ENCODE measurements at regions of chr10 and their contacts with region 1.

Region 1: DNA sequence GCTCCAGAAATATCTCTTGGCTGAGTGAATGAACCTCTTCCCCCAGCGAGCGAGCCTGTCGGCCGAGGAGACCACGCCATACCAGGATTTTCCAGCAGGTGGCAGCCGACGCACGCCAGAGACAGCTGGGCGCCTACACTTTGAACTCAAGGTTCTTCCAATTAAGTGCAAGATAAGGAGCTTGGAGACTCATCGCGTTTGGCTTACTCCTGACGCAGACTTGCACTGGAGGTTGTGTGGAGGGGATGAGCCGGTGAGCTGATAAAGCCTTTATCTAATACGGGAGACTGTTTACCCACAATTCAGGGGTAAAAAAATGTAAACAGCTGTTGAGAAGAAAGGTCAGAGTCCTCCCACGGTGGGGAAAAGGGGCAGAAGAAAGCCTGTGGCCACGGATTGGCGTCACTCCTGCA is 45.9 kb upstream of the EMX2 start:
- DNase-seq: peak; percentile 72
- H3K4me3 Mint-ChIP-seq: no peak overlapping the region
- H3K27ac Mint-ChIP-seq: no peak overlapping the region
- H3K4me1 Mint-ChIP-seq: peaks cover 7% of the 10 kb centered on the region
- H3K27me3 Mint-ChIP-seq: peaks cover 69% of the 10 kb centered on the region
- CTCF ChIP-seq: peak; percentile 70

Region 2: GRCh38 chr10:117518246-117518645 is 21.6 kb after region 1 on chr10:
- CTCF ChIA-PET with region 1: no interaction called
- intact Hi-C with region 1: no loop called
- DNase-seq: no peak
- H3K4me3 Mint-ChIP-seq: no peak overlapping the region
- H3K27ac Mint-ChIP-seq: no peak overlapping the region
- H3K4me1 Mint-ChIP-seq: no peaks in the 10 kb centered on the region
- H3K27me3 Mint-ChIP-seq: peaks cover 32% of the 10 kb centered on the region
- CTCF ChIP-seq: no peak

Region 3: DNA sequence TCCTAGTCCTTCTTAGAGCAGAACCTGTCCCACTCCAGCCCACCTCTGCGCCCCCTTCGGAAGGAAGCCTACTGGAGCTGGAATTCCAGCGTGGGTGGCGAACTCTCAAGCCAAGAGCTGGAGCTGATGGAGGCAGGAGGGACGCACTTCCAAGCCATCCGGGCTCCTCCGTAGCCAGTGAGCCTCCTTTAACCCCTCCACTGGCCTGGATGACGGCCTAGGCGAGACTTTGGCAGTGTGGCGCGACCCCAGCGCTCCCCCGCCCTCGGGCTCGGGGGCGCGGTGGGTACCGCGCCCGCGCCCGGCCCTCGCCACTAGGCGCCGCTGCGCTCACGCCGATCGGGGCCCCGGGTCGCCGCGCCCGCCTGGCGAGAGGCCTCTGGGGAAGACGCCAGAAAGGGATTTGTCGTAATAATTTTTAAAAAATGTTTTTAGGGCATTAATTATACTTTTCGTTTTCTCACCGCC is 40.8 kb after region 1 on chr10:
- CTCF ChIA-PET with region 1: no interaction called
- intact Hi-C with region 1: no loop called
- DNase-seq: peak; percentile 28
- H3K4me3 Mint-ChIP-seq: no peak overlapping the region
- H3K27ac Mint-ChIP-seq: no peak overlapping the region
- H3K4me1 Mint-ChIP-seq: no peaks in the 10 kb centered on the region
- H3K27me3 Mint-ChIP-seq: peaks cover 55% of the 10 kb centered on the region
- CTCF ChIP-seq: peak; percentile 59

Region 4: DNA sequence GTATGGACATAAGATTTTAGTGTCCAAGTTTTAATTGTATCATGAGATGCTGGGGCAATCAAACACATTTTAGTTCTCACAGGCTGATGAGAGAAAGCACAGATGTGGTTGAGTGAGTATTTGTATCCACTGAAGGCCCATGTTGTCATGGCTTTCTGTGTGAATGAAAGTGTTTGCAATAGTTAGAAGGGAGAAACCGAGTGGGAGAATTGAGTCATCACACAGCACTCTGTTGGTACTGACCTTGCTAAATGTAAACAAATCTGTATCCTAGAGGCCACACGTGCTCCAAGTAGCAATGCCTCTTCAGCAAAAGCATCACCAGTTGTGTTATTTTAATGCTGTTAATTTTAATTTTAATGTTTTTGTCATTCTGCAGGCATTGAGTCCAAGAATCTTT is 167.1 kb after region 1 on chr10:
- CTCF ChIA-PET with region 1: no interaction called
- intact Hi-C with region 1: no loop called
- DNase-seq: no peak
- H3K4me3 Mint-ChIP-seq: no peak overlapping the region
- H3K27ac Mint-ChIP-seq: no peak overlapping the region
- H3K4me1 Mint-ChIP-seq: no peaks in the 10 kb centered on the region
- H3K27me3 Mint-ChIP-seq: peaks cover 18% of the 10 kb centered on the region
- CTCF ChIP-seq: no peak

Region 5: DNA sequence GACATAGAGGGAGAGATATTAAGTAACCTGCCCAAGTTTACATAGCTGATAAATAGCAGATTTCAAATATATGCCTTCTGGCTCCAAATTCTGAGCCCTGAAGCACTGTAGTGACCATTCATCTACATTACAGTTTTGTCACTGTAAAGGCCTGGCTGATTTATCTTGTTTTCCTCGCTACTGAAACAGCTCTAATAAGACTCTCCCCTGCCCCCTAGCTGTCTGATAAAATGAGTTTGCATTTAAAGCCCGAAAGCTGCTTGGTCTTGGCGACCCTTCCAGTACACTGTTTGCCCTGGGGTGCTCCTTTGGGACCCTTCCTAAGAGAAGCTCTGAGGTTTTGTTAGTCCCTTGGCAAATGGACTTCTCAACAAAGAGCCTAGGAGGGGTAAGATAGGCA is 609.8 kb after region 1 on chr10:
- CTCF ChIA-PET with region 1: interaction called, 4 read pairs
- intact Hi-C with region 1: loop called (anchors 1 kb)
- DNase-seq: peak; percentile 15
- H3K4me3 Mint-ChIP-seq: no peak overlapping the region
- H3K27ac Mint-ChIP-seq: no peak overlapping the region
- H3K4me1 Mint-ChIP-seq: no peaks in the 10 kb centered on the region
- H3K27me3 Mint-ChIP-seq: no peaks in the 10 kb centered on the region
- CTCF ChIP-seq: no peak

Region 6: DNA sequence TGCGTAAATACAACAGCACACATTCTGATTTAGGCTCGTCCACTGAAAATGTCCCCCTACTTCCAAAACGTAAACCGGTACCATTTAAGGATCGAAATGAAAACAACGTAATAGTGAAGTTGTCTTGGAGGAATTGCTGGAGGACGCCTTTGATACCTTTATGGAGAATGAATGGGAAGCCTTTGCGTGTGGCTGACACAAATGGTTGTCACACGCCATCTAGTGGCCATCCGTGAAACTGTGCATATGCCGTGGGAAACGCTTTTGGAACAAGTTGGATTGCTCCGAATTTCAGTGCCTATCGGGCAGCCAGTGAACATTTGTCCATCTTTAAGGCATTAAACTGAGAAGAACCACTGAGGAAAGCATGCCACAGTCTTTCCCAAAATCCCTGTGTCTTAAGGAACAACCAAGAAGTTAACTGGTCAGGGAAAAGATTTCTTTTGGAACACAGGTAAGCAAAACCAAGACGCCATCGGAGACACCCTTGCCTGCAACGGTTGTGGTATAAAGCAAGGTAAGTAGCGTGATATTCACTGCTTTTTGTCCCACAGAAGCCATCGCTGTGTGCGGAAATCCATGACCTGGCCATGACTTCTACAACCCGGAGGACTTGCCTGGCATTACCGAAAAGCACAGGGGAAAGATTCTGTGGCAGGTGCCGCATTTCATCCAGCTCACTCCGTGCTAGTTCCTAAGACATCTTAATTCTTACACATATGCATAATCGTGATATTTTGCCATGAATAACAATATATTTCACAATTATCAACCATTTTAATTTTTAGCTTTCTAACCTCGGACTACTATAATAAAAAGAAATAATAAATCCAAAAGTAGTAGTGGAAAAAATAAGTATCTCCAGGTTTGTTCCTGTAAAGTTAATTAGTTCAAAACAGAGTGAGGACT is 744.9 kb after region 1 on chr10:
- CTCF ChIA-PET with region 1: interaction called, 5 read pairs
- intact Hi-C with region 1: loop called (anchors 1 kb)
- DNase-seq: peak; percentile 67
- H3K4me3 Mint-ChIP-seq: no peak overlapping the region
- H3K27ac Mint-ChIP-seq: no peak overlapping the region
- H3K4me1 Mint-ChIP-seq: no peaks in the 10 kb centered on the region
- H3K27me3 Mint-ChIP-seq: peaks cover 52% of the 10 kb centered on the region
- CTCF ChIP-seq: peak; percentile 77

Region 7: DNA sequence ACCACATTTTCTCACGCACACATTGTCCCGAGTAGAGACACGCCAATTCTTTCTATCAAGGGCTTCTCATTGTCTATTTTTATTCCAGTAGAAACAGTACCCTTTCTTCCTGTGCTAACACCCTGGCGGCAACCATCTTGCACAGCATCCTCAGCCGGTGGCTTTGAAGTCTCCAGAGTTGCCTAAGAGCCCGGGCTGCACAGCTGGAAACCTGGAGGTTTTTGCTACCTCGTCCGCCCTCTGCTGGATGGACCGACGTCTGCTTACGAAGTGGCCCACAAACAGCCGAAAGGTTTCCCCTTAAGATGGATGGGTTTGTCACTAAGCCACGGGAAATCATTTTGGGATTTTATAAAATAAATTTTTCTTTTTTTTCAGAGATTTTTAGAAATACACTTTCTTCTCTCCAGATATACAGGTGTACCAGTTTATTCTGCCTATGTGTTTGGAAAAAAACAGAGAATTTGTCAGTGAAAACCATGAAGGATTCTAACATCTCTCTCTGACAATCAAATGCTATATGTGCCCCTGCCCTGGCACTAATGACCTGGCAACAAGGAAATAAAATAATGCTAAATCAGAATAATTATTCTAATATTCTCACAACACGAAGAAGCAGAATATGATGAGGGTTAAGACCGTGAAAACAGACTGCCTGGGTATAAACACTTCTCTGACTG is 927.3 kb after region 1 on chr10:
- CTCF ChIA-PET with region 1: no interaction called
- intact Hi-C with region 1: loop called (anchors 10 kb)
- DNase-seq: peak; percentile 78
- H3K4me3 Mint-ChIP-seq: no peak overlapping the region
- H3K27ac Mint-ChIP-seq: no peak overlapping the region
- H3K4me1 Mint-ChIP-seq: no peaks in the 10 kb centered on the region
- H3K27me3 Mint-ChIP-seq: peaks cover 35% of the 10 kb centered on the region
- CTCF ChIP-seq: peak; percentile 68

Region 8: DNA sequence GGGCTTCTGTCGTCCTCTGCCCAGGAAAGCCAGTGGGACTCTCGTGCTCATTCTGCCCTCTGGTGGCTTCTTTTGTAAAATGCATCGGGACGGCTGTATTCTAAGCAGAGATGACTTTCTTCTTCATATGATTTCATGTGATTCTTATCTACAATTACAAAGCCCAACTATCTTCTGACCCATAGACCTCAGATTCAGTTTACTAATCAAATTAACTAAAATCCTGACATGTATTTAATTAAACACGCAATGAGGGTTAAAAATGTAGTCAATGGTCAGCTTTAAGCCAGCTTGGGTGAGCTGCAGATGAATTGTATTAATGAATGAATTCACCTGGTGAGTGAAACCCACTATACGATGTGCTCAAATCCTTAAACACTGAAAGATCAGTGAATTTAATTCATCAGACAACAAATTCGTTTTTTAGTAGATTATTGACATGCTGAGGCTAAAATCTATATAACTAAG is 963.1 kb after region 1 on chr10:
- CTCF ChIA-PET with region 1: interaction called, 4 read pairs
- intact Hi-C with region 1: loop called (anchors 1 kb)
- DNase-seq: peak; percentile 61
- H3K4me3 Mint-ChIP-seq: no peak overlapping the region
- H3K27ac Mint-ChIP-seq: no peak overlapping the region
- H3K4me1 Mint-ChIP-seq: no peaks in the 10 kb centered on the region
- H3K27me3 Mint-ChIP-seq: peaks cover 60% of the 10 kb centered on the region
- CTCF ChIP-seq: peak; percentile 47

Region 9: GRCh38 chr10:118543714-118544400 is 1047.2 kb after region 1 on chr10:
- CTCF ChIA-PET with region 1: interaction called, 3 read pairs
- intact Hi-C with region 1: loop called (anchors 10 kb)
- DNase-seq: peak; percentile 64
- H3K4me3 Mint-ChIP-seq: no peak overlapping the region
- H3K27ac Mint-ChIP-seq: no peak overlapping the region
- H3K4me1 Mint-ChIP-seq: no peaks in the 10 kb centered on the region
- H3K27me3 Mint-ChIP-seq: peaks cover 95% of the 10 kb centered on the region
- CTCF ChIP-seq: peak; percentile 45

Measured in Calu3 (cell line).